Caco-2 (cell line): ENCODE measurements at regions of chr22 and their contacts with region 1.

Region 1: GRCh38 chr22:35840302-35840739 is 122.6 kb downstream of the APOL5 start:
- DNase-seq: peak; percentile 88 to 95
- H3K4me3 ChIP-seq: peak overlapping the region; percentile 50
- H3K4me3 Mint-ChIP-seq: peak overlapping the region; percentile 90
- H3K27ac Mint-ChIP-seq: peak overlapping the region; percentile 81
- H3K4me1 ChIP-seq: peaks cover 32% of the 10 kb centered on the region
- H3K4me1 Mint-ChIP-seq: peaks cover 34% of the 10 kb centered on the region
- H3K27me3 ChIP-seq: no peaks in the 10 kb centered on the region
- H3K27me3 Mint-ChIP-seq: no peaks in the 10 kb centered on the region
- CTCF ChIP-seq: no peak

Region 2: DNA sequence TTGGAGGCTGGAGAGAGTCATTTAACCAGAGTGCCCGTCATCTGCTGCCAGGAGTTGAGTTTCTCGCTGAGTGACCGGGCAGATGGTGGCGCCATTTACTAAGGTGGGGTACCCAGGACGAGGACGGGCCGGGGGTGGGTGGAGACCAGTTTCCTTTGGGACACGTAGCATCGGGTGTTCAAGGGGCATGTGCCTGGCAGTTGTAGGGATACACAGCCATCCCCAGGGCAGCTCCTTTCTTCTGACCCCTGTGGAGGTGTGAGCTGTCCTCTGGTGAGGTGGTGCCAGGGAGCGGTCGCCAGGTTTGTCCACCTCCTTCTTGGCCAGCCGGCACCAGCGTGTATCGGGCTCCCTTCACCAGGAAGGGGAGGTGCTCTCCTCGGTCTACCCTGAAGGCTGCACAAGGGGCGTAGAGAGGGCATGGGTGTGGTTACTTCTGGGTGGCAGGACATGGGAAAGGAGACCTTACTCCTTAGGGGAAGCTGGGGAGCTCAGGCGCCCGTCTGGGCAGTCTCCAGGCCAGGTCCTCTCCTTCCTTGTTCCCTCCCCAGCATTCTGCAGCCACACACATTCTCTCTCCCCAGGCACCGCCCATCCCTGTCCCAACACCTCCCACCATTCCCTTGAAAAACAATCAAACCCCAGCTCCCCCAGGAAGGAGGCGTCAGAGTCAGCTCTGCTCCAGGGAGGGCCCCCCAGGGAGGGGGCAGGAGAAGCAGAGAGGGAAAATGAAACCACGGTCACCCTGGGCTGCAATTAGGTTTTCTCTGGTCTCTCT is 212.9 kb before region 1 on chr22:
- CTCF ChIA-PET with region 1: interaction called, 3 read pairs
- POLR2A ChIA-PET with region 1: no interaction called
- intact Hi-C with region 1: loop called (anchors 1 kb)
- DNase-seq: peak; percentile 76 to 79
- H3K4me3 ChIP-seq: peak overlapping the region; percentile 65
- H3K4me3 Mint-ChIP-seq: peak overlapping the region; percentile 79
- H3K27ac Mint-ChIP-seq: peak overlapping the region; percentile 78
- H3K4me1 ChIP-seq: peaks cover 8% of the 10 kb centered on the region
- H3K4me1 Mint-ChIP-seq: peaks cover 18% of the 10 kb centered on the region
- H3K27me3 ChIP-seq: no peaks in the 10 kb centered on the region; the same call in 1 of the 2 replicates
- H3K27me3 Mint-ChIP-seq: no peaks in the 10 kb centered on the region
- CTCF ChIP-seq: peak in 1 of 2 experiments; percentile 68

Region 3: GRCh38 chr22:35769974-35770373 is 70.3 kb before region 1 on chr22:
- CTCF ChIA-PET with region 1: no interaction called
- POLR2A ChIA-PET with region 1: no interaction called
- intact Hi-C with region 1: no loop called
- DNase-seq: no peak
- H3K4me3 ChIP-seq: no peak overlapping the region
- H3K4me3 Mint-ChIP-seq: no peak overlapping the region
- H3K27ac Mint-ChIP-seq: no peak overlapping the region
- H3K4me1 ChIP-seq: peaks cover 7% of the 10 kb centered on the region; the same call in 1 of the 2 replicates
- H3K4me1 Mint-ChIP-seq: peaks cover 10% of the 10 kb centered on the region
- H3K27me3 ChIP-seq: no peaks in the 10 kb centered on the region
- H3K27me3 Mint-ChIP-seq: no peaks in the 10 kb centered on the region
- CTCF ChIP-seq: no peak

Region 4: GRCh38 chr22:35809816-35810215 is 30.5 kb before region 1 on chr22:
- CTCF ChIA-PET with region 1: no interaction called
- POLR2A ChIA-PET with region 1: no interaction called
- intact Hi-C with region 1: no loop called
- DNase-seq: peak in 1 of 2 experiments; percentile 38
- H3K4me3 ChIP-seq: no peak overlapping the region
- H3K4me3 Mint-ChIP-seq: no peak overlapping the region
- H3K27ac Mint-ChIP-seq: peak overlapping the region; percentile 18
- H3K4me1 ChIP-seq: 0 out of 2 replicates have a peak, but pooled peaks cover 6% of the 10 kb centered on the region
- H3K4me1 Mint-ChIP-seq: peaks cover 19% of the 10 kb centered on the region
- H3K27me3 ChIP-seq: no peaks in the 10 kb centered on the region
- H3K27me3 Mint-ChIP-seq: no peaks in the 10 kb centered on the region
- CTCF ChIP-seq: no peak

Region 5: DNA sequence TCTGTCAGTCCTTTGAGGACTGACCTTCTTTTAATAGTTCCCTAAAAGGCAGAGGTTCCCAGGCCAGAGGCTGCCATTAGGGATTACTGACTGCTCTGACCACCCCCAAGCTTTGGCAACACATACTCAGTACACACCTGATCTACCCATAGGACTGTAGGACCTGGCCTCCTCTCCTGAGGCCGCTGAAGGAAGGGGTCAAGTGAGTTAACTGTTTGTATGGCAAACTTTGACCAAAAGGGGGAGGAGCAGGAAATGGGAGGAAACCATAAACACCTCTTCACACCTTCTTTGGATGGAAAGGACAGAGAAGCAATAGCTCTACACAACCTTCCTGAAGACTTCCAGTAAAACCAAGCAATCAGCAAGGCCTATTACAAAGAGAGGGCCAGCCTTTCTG is 18.7 kb before region 1 on chr22:
- CTCF ChIA-PET with region 1: interaction called, 7 read pairs
- POLR2A ChIA-PET with region 1: no interaction called
- intact Hi-C with region 1: loop called (anchors 2 kb)
- DNase-seq: peak in 1 of 2 experiments; percentile 11
- H3K4me3 ChIP-seq: no peak overlapping the region
- H3K4me3 Mint-ChIP-seq: no peak overlapping the region
- H3K27ac Mint-ChIP-seq: no peak overlapping the region
- H3K4me1 ChIP-seq: peaks cover 25% of the 10 kb centered on the region
- H3K4me1 Mint-ChIP-seq: peaks cover 36% of the 10 kb centered on the region
- H3K27me3 ChIP-seq: no peaks in the 10 kb centered on the region
- H3K27me3 Mint-ChIP-seq: no peaks in the 10 kb centered on the region
- CTCF ChIP-seq: no peak

Region 6: GRCh38 chr22:35914665-35915476 is 74.5 kb after region 1 on chr22:
- CTCF ChIA-PET with region 1: interaction called, 3 read pairs
- POLR2A ChIA-PET with region 1: no interaction called
- intact Hi-C with region 1: loop called (anchors 2 kb)
- DNase-seq: peak; percentile 84 to 87
- H3K4me3 ChIP-seq: peak overlapping the region; percentile 39
- H3K4me3 Mint-ChIP-seq: peak overlapping the region; percentile 87
- H3K27ac Mint-ChIP-seq: peak overlapping the region; percentile 76
- H3K4me1 ChIP-seq: peaks cover 37% of the 10 kb centered on the region
- H3K4me1 Mint-ChIP-seq: peaks cover 62% of the 10 kb centered on the region
- H3K27me3 ChIP-seq: no peaks in the 10 kb centered on the region
- H3K27me3 Mint-ChIP-seq: no peaks in the 10 kb centered on the region
- CTCF ChIP-seq: no peak

Region 7: GRCh38 chr22:36123673-36124630 is 283.6 kb after region 1 on chr22:
- CTCF ChIA-PET with region 1: no interaction called
- POLR2A ChIA-PET with region 1: no interaction called
- intact Hi-C with region 1: loop called (anchors 10 kb)
- DNase-seq: peak; percentile 92 to 94
- H3K4me3 ChIP-seq: peak overlapping the region; percentile 25
- H3K4me3 Mint-ChIP-seq: peak overlapping the region; percentile 63
- H3K27ac Mint-ChIP-seq: peak overlapping the region; percentile 85
- H3K4me1 ChIP-seq: 0 out of 2 replicates have a peak, but pooled peaks cover 3% of the 10 kb centered on the region
- H3K4me1 Mint-ChIP-seq: peaks cover 7% of the 10 kb centered on the region
- H3K27me3 ChIP-seq: no peaks in the 10 kb centered on the region
- H3K27me3 Mint-ChIP-seq: peaks cover 9% of the 10 kb centered on the region
- CTCF ChIP-seq: peak; percentile 92 to 97